Activated naive CD4-positive, alpha-beta T cell treated with anti-CD3 and anti-CD28 coated beads for 36 hours (primary cell): ENCODE measurements at regions of chr19 and their contacts with region 1.

Region 1: DNA sequence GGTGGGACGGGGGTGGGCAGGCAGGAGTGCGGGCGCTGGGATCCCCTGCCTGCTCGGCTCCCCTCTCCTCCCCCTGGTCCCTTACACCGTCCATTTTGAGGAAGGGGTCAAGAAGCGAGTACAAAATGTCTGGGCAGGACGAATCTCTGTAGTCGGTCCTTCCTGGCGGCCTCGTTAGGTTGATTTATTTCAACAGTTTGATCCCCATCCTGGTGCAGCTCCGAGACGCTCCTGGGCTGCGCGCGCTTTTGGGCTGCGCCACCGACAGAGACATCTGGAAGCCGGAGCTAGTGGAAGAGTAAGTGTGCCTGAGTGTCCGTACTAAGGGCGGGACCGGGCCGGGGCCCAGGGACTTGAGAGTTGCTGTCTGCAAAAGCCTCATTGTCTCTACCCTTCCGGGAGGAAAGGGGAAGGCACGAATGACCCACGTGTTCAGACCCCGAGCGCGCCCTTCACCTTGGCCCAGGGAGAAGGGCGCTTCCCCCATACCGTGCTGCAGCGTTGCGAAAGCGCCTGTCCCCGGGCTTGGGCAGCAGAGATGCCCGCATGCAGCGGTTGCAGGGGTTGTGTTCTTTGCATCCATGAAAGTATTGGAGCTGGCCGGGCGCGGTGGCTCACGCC is 1.8 kb downstream of the ZNF114 start:
- DNase-seq: peak; percentile 23
- H3K4me3 Mint-ChIP-seq: peak overlapping the region; percentile 81
- H3K27ac Mint-ChIP-seq: no peak overlapping the region
- H3K4me1 Mint-ChIP-seq: peaks cover 14% of the 10 kb centered on the region
- H3K27me3 Mint-ChIP-seq: peaks cover 8% of the 10 kb centered on the region

Region 2: GRCh38 chr19:48123907-48124651 is 147.6 kb before region 1 on chr19:
- CTCF ChIA-PET with region 1: no interaction called
- intact Hi-C with region 1: no loop called
- DNase-seq: peak; percentile 34
- H3K4me3 Mint-ChIP-seq: no peak overlapping the region
- H3K27ac Mint-ChIP-seq: no peak overlapping the region
- H3K4me1 Mint-ChIP-seq: peaks cover 12% of the 10 kb centered on the region
- H3K27me3 Mint-ChIP-seq: no peaks in the 10 kb centered on the region

Region 3: GRCh38 chr19:48290771-48291488 is 19.3 kb after region 1 on chr19:
- CTCF ChIA-PET with region 1: interaction called, 69 read pairs
- intact Hi-C with region 1: loop called (anchors 1 kb)
- DNase-seq: peak; percentile 59
- H3K4me3 Mint-ChIP-seq: peak overlapping the region; percentile 74
- H3K27ac Mint-ChIP-seq: no peak overlapping the region
- H3K4me1 Mint-ChIP-seq: peaks cover 6% of the 10 kb centered on the region
- H3K27me3 Mint-ChIP-seq: no peaks in the 10 kb centered on the region

Region 4: GRCh38 chr19:48826606-48827020 is 555.0 kb after region 1 on chr19:
- CTCF ChIA-PET with region 1: no interaction called
- intact Hi-C with region 1: no loop called
- DNase-seq: no peak
- H3K4me3 Mint-ChIP-seq: no peak overlapping the region
- H3K27ac Mint-ChIP-seq: no peak overlapping the region
- H3K4me1 Mint-ChIP-seq: no peaks in the 10 kb centered on the region
- H3K27me3 Mint-ChIP-seq: no peaks in the 10 kb centered on the region